GM12878 (cell line): ENCODE measurements at regions of chr7 and their contacts with region 1.

Region 1: GRCh38 chr7:128425850-128426249 is 16.1 kb upstream of the IMPDH1 start:
- DNase-seq: no peak
- ATAC-seq: peak; percentile 72
- H3K4me3 ChIP-seq: no peak overlapping the region
- H3K27ac ChIP-seq: no peak overlapping the region
- H3K4me1 ChIP-seq: peaks cover 5% of the 10 kb centered on the region
- H3K27me3 ChIP-seq: no peaks in the 10 kb centered on the region
- CTCF ChIP-seq: peak; percentile 79 to 92 (median 92)
- EP300 ChIP-seq: no peak
- POLR2A ChIP-seq: no peak
- RAD21 ChIP-seq: peak; percentile 74

Region 2: DNA sequence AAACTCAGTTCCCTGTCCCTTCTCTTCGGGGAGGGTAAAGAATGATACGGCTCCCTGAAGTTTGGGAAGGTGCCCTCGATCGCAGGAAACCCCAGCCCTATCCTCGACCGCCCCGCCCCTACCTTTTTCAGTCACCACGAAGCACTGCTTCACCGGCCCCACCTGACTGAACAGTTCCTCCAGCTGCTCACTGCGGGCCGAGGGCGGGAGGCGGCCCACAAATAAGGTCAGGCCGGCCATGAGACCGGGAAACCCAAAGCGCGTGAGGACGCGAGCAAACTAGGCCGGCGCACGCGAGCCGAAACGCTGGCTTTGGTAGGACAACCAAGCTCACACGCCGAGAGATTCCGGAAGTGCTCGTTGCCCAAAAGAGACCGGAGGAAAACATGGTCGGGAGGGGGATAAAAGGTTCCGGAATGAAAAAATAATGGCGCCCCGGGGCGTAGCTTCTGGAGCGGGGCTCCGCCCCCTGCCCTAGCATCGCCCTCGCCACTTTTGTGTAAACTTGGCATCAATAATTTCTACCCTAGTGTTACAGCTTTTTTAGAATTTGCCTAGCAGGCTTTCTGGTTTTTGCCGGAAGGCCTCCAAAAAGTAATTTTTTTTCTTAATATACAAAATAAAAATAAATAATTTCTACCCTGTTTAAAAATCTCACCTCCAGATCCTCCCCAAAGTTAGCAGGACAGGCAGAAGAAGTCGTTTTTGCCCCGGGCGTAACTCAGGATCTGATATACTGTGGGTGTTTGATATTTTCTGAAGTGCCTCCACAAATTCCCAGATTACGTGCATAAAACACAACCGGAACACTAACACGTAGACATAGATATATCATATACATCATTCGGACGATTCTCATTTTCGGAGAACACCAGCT is 82.1 kb before region 1 on chr7 and contains the start of gene RBM28:
- CTCF ChIA-PET with region 1: interaction called, 79 read pairs
- POLR2A ChIA-PET with region 1: no interaction called
- RAD21 ChIA-PET with region 1: interaction called, 14 read pairs
- SMC1A ChIA-PET with region 1: interaction called, 6 read pairs
- in situ Hi-C with region 1: no loop called
- intact Hi-C with region 1: no loop called
- DNase-seq: peak; percentile 73
- ATAC-seq: peak; percentile 96
- H3K4me3 ChIP-seq: peak within 1 kb of the TSS; percentile 81
- H3K27ac ChIP-seq: peak within 1 kb of the TSS; percentile 51
- H3K4me1 ChIP-seq: peaks cover 9% of the 10 kb centered on the region
- H3K27me3 ChIP-seq: 0 out of 4 replicates have a peak, but pooled peaks cover 0 to under 1% of the 10 kb centered on the region in 2 experiments
- CTCF ChIP-seq: no peak
- EP300 ChIP-seq: no peak
- POLR2A ChIP-seq: peak; percentile 94
- RAD21 ChIP-seq: no peak
- polyA plus RNA-seq, gene RBM28: 17.9 to 29.6 TPM

Region 3: DNA sequence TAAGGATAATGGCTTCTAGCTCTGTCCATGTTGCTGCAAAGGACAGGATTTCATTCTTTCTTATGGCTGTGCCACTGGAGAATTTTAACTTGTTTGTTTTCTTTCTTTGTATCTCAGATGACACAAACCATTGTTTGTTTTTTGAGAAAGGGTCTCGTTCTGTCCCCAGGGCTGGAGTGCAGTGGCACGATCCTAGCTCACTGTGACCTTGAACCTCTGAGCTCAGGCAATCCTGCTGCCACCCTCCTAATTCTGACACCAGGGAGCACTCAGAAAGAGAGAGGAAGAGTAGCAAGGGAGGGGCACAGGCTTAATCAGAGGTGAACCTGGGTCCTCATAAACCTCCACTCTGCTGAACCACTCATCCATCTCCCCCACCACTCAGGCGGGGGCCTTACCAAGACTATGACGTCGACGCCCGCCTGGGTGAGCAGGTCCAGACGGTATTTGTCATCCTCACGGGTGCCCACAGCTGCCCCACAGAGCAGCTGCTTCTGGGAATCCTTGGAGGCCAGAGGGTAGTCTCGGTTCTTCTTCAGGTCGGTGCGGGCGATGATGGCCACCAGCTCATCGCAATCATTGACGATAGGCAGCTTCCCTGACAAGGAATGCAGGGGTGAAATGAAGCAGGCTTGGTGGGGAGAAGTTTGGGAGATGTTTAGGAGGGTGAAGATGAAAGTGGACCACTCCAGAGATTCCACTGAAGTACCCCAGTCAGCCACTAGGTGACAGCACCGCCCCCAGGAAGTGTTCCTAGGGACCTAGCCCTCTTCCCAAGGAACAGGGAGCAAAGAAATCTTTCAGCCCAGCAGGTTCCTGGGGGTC is 27.6 kb before region 1 on chr7:
- CTCF ChIA-PET with region 1: interaction called, 458 read pairs
- POLR2A ChIA-PET with region 1: interaction called, 3 read pairs
- RAD21 ChIA-PET with region 1: interaction called, 46 read pairs
- SMC1A ChIA-PET with region 1: interaction called, 80 read pairs
- in situ Hi-C with region 1: no loop called
- intact Hi-C with region 1: no loop called
- DNase-seq: no peak
- ATAC-seq: peak; percentile 73
- H3K4me3 ChIP-seq: no peak overlapping the region
- H3K27ac ChIP-seq: no peak overlapping the region
- H3K4me1 ChIP-seq: no peaks in the 10 kb centered on the region
- H3K27me3 ChIP-seq: no peaks in the 10 kb centered on the region
- CTCF ChIP-seq: peak; percentile 90 to 99 (median 91)
- EP300 ChIP-seq: no peak
- POLR2A ChIP-seq: no peak
- RAD21 ChIP-seq: peak; percentile 64

Region 4: DNA sequence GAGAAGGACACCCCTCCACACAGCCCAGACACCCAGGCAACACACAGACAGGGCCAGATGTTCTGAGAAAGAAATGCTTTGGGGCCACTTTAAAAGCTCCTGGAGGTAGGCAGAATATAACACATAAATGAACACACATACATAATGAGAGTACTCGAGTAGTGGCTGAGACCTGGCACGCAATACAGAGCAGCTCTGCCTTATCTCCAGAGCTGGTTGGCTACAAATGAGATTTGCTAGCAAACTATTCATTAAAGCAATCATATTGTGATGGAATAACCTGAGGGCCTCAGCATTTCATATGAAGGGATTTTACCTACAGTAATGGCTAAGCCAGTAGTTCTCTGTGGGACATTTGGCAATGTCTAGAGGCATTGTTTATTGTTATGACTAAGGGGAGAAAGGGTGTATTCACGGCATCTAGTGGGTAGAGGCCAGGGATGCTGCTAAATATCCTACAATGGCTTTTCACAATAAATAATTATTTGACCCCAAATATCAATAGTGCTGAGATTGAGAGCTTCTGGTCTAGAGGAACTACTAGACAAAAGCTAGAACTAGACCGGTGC is 10.5 kb before region 1 on chr7:
- CTCF ChIA-PET with region 1: interaction called, 458 read pairs
- POLR2A ChIA-PET with region 1: no interaction called
- RAD21 ChIA-PET with region 1: interaction called, 23 read pairs
- SMC1A ChIA-PET with region 1: interaction called, 14 read pairs
- in situ Hi-C with region 1: no loop called
- intact Hi-C with region 1: no loop called
- DNase-seq: no peak
- ATAC-seq: no peak
- H3K4me3 ChIP-seq: no peak overlapping the region
- H3K27ac ChIP-seq: no peak overlapping the region
- H3K4me1 ChIP-seq: no peaks in the 10 kb centered on the region; the same call in 1 of the 2 replicates
- H3K27me3 ChIP-seq: no peaks in the 10 kb centered on the region; a peak in 1 of 4 replicates
- CTCF ChIP-seq: no peak
- EP300 ChIP-seq: no peak
- POLR2A ChIP-seq: no peak
- RAD21 ChIP-seq: no peak

Region 5: GRCh38 chr7:128443831-128444600 is 18.2 kb after region 1 on chr7:
- CTCF ChIA-PET with region 1: interaction called, 227 read pairs
- POLR2A ChIA-PET with region 1: interaction called, 6 read pairs
- RAD21 ChIA-PET with region 1: interaction called, 15 read pairs
- SMC1A ChIA-PET with region 1: interaction called, 55 read pairs
- in situ Hi-C with region 1: no loop called
- intact Hi-C with region 1: no loop called
- DNase-seq: no peak
- ATAC-seq: peak; percentile 42
- H3K4me3 ChIP-seq: no peak overlapping the region
- H3K27ac ChIP-seq: no peak overlapping the region
- H3K4me1 ChIP-seq: peaks cover 9% of the 10 kb centered on the region; the same call in 1 of the 2 replicates
- H3K27me3 ChIP-seq: no peaks in the 10 kb centered on the region
- CTCF ChIP-seq: no peak
- EP300 ChIP-seq: no peak
- POLR2A ChIP-seq: no peak
- RAD21 ChIP-seq: no peak

Region 6: GRCh38 chr7:128462460-128462859 is 36.6 kb after region 1 on chr7:
- CTCF ChIA-PET with region 1: interaction called, 463 read pairs
- POLR2A ChIA-PET with region 1: interaction called, 8 read pairs
- RAD21 ChIA-PET with region 1: interaction called, 216 read pairs
- SMC1A ChIA-PET with region 1: interaction called, 296 read pairs
- in situ Hi-C with region 1: loop called (anchors 5 kb)
- intact Hi-C with region 1: loop called (anchors 1 kb)
- DNase-seq: no peak
- ATAC-seq: no peak
- H3K4me3 ChIP-seq: no peak overlapping the region
- H3K27ac ChIP-seq: no peak overlapping the region
- H3K4me1 ChIP-seq: peaks cover 22% of the 10 kb centered on the region
- H3K27me3 ChIP-seq: no peaks in the 10 kb centered on the region
- CTCF ChIP-seq: no peak
- EP300 ChIP-seq: no peak
- POLR2A ChIP-seq: no peak
- RAD21 ChIP-seq: no peak